Activated CD4-positive, alpha-beta T cell treated with anti-CD3 and anti-CD28 coated beads, Interleukin-2, amount 10 ng/mL, durations not matched to agents 24 days and 14 days (primary cell): ENCODE measurements at regions of chr5 and their contacts with region 1.

Region 1: DNA sequence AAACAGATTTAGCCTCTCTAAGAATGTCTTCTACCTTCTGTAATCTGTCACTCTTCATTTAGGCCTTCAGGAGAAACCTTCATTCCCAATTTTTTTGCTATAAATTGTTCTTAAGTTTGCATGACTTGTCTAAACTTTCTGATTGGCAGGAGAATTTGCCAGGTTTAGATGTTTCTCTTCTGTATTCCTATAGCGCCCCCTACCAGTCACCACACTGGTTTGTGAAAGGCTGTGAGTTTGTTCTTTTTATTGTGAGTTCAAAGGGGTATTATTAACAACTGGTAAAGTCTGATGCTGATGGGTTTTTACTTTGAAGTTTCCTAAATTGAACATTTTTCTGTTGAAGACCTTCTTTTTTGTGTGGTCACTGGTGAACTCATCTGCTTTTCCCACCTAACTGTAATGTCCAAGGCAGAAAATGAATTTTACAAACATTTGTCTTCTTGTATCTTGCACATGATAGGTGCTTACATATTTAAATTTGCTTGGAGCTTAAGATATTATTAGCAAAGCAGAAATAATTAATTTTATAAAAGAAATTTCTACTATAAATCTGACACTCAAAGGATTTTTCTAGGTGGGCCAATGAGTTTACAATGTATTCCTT is 18.4 kb upstream of the F2RL2 start:
- DNase-seq: peak; percentile 90
- H3K4me3 Mint-ChIP-seq: no peak overlapping the region
- H3K27ac Mint-ChIP-seq: no peak overlapping the region
- H3K4me1 Mint-ChIP-seq: peaks cover 14% of the 10 kb centered on the region
- H3K27me3 Mint-ChIP-seq: no peaks in the 10 kb centered on the region

Region 2: GRCh38 chr5:76337953-76338451 is 303.6 kb before region 1 on chr5:
- intact Hi-C with region 1: loop called (anchors 10 kb)
- DNase-seq: peak; percentile 87
- H3K4me3 Mint-ChIP-seq: no peak overlapping the region
- H3K27ac Mint-ChIP-seq: no peak overlapping the region
- H3K4me1 Mint-ChIP-seq: peaks cover 34% of the 10 kb centered on the region
- H3K27me3 Mint-ChIP-seq: no peaks in the 10 kb centered on the region

Region 3: GRCh38 chr5:76601470-76601869 is 40.1 kb before region 1 on chr5:
- intact Hi-C with region 1: loop called (anchors 1 kb)
- DNase-seq: peak; percentile 79
- H3K4me3 Mint-ChIP-seq: no peak overlapping the region
- H3K27ac Mint-ChIP-seq: no peak overlapping the region
- H3K4me1 Mint-ChIP-seq: peaks cover 9% of the 10 kb centered on the region
- H3K27me3 Mint-ChIP-seq: no peaks in the 10 kb centered on the region